ENCODE measurements at regions of chr20 and their contacts with region 1.

Region 1: GRCh38 chr20:23050847-23051631 is 1.6 kb upstream of the THBD start:
- DNase-seq: peak; percentile 73 to 82
- H3K4me3 ChIP-seq: peak overlapping the region; percentile 75
- H3K27ac ChIP-seq: peak overlapping the region; percentile 97
- H3K4me1 ChIP-seq: peaks cover 22% of the 10 kb centered on the region
- H3K27me3 ChIP-seq: no peaks in the 10 kb centered on the region
- CTCF ChIP-seq: peak; percentile 89

Region 2: GRCh38 chr20:22333885-22334545 is 717.0 kb before region 1 on chr20:
- CTCF ChIA-PET with region 1: no interaction called
- POLR2A ChIA-PET with region 1: no interaction called
- intact Hi-C with region 1: loop called (anchors 10 kb)
- DNase-seq: peak in 1 of 2 experiments; percentile 65
- H3K4me3 ChIP-seq: no peak overlapping the region
- H3K27ac ChIP-seq: no peak overlapping the region
- H3K4me1 ChIP-seq: no peaks in the 10 kb centered on the region
- H3K27me3 ChIP-seq: peaks cover 47% of the 10 kb centered on the region
- CTCF ChIP-seq: peak; percentile 85

Region 3: DNA sequence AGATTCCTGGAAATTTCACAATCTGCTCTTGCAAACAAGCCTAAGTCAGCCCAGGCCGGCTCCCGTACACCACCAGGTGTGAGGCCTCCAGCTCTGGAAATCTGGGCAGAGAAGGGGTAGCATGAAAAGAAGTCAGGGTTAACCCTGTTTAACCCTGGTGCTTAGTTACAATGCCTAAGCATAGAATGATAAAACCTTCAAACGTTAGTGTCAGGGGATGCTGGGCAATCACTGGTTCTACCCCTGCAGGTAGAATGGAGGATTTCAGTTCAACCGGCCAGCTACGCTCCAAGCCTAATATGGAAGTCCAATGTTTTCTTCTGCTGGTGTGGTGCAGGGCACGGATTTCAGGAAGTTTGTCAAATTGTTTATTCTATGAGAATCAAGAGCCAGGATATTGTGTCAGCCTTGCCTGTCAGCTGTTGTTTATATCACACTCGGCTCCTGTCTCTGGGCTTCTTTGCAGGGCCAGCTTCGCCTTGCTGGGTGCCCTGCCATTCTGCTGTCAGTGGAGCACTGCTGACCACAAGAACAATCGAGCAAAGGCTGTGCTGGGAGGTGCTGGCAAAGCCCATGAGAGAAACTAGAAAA is 55.3 kb after region 1 on chr20:
- CTCF ChIA-PET with region 1: no interaction called
- POLR2A ChIA-PET with region 1: no interaction called
- intact Hi-C with region 1: no loop called
- DNase-seq: no peak
- H3K4me3 ChIP-seq: no peak overlapping the region
- H3K27ac ChIP-seq: no peak overlapping the region
- H3K4me1 ChIP-seq: no peaks in the 10 kb centered on the region
- H3K27me3 ChIP-seq: no peaks in the 10 kb centered on the region
- CTCF ChIP-seq: no peak

Region 4: GRCh38 chr20:23200918-23201317 is 149.9 kb after region 1 on chr20:
- CTCF ChIA-PET with region 1: interaction called, 8 read pairs
- POLR2A ChIA-PET with region 1: interaction called, 6 read pairs
- intact Hi-C with region 1: loop called (anchors 1 kb)
- DNase-seq: peak; percentile 49 to 60
- H3K4me3 ChIP-seq: no peak overlapping the region
- H3K27ac ChIP-seq: no peak overlapping the region
- H3K4me1 ChIP-seq: no peaks in the 10 kb centered on the region
- H3K27me3 ChIP-seq: no peaks in the 10 kb centered on the region
- CTCF ChIP-seq: peak; percentile 72

Region 5: DNA sequence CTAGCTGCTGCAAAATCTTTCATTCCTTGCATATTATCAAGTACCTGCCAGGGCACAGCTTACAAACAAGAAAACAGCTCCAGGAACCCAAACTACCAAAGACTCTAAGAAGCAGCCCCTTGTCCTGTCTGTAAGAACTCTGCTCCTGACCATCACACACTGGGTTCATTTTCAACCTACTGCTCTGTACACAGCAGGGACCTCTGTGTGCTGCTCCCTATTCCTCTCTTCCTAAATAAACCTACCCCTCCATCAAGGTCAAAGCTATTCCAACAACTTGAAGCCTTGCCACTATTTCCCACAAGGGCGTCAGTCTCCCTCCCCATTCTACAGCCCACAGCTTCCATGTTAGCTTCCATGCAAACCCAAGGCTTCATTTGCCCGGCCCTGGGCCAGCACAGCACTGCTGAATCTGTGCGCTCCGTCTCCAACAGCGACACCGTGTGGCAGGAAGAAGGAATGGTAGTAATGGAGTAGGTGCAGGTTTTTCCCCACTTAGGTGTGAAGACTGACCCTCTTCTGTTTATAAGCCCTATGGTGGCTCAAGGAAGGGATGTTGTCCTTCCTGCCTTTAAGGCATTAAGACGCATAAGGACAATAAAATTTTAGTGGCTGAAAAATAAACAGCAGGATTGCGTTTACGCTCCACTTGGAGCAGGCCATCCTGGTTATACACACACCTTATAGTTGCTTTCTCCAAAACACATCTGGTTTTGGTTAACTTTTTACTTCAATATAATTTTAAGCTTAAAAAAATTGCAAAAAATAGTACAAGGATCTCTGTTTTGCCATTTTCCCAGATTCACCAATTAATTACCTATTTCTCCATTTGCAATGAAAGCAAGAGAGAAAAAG is 184.4 kb after region 1 on chr20:
- CTCF ChIA-PET with region 1: no interaction called
- POLR2A ChIA-PET with region 1: no interaction called
- intact Hi-C with region 1: loop called (anchors 5 kb)
- DNase-seq: peak; percentile 43 to 44
- H3K4me3 ChIP-seq: no peak overlapping the region
- H3K27ac ChIP-seq: no peak overlapping the region
- H3K4me1 ChIP-seq: peaks cover 16% of the 10 kb centered on the region
- H3K27me3 ChIP-seq: no peaks in the 10 kb centered on the region
- CTCF ChIP-seq: peak; percentile 88

Region 6: DNA sequence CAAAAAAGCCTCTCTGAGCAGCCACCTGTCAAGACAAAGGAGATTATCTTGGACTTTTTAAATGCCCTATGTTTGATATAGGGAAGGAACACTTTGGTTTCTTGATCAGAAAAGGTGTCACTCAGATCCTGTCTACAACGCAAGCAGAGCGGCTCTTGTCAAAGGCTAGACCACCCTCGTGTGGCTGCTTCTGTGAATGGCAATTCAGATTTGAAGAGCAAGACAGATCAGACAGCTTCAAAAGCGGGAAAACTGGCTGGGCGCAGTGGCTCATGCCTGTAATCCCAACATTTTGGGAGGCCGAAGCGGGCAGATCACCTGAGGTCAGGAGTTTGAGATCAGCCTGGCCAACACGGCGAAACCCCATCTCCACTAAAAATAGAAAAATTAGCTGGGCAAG is 289.5 kb after region 1 on chr20:
- CTCF ChIA-PET with region 1: no interaction called
- POLR2A ChIA-PET with region 1: no interaction called
- intact Hi-C with region 1: loop called (anchors 1 kb)
- DNase-seq: peak; percentile 59 to 61
- H3K4me3 ChIP-seq: no peak overlapping the region
- H3K27ac ChIP-seq: no peak overlapping the region
- H3K4me1 ChIP-seq: no peaks in the 10 kb centered on the region
- H3K27me3 ChIP-seq: no peaks in the 10 kb centered on the region
- CTCF ChIP-seq: peak; percentile 85